Right ventricle myocardium inferior (tissue), 1 donor: ENCODE measurements at regions of chr3 and their contacts with region 1.

Region 1: GRCh38 chr3:8938021-8938420 is 25.3 kb downstream of the RAD18 start:
- DNase-seq: no peak
- ATAC-seq: no peak

Region 2: DNA sequence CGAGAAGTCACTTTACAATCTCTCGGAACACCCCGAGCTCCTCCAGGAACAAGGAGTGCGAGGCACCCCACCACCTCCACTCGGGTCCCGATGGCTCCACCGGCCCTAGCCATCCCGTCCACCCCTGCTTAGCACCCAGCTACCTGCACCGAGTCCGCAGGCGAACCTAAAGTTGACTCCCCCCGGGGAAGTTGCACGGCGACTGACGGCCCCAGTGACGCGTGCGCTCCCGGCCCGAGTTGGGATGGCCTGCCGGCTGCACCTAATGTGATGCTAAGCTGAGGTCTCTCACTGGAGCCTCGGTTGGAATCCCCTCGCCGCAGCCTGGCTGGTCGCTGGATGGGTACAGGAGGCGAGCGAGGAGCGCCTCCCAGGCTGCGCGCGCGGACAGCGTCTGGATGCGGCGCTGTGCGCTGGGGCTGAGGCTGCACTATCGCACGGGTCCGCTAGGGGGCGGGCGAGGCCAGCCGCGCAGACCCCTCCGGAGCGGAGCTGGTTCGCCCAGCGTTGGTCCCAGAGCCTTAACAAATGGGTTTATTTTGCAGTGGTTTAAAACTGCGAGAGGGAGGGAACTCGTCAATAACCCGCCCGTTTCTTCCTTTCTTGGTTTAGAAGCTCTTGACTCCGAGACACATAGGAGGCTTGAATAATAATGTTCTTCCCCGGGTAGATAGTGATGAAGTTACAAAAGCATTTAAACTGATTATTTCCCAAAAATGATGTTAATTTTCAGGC is 168.8 kb before region 1 on chr3 and contains the start of gene OXTR:
- intact Hi-C with region 1: loop called (anchors 10 kb)
- DNase-seq: peak; percentile 74
- ATAC-seq: peak; percentile 92
- total RNA-seq, gene OXTR: 0.32 TPM